ENCODE measurements at regions of chr7 and their contacts with region 1.

Region 1: GRCh38 chr7:139321071-139321745 is 19.9 kb upstream of the FMC1 start:
- DNase-seq: peak; percentile 23
- CTCF ChIP-seq: peak; percentile 44

Region 2: DNA sequence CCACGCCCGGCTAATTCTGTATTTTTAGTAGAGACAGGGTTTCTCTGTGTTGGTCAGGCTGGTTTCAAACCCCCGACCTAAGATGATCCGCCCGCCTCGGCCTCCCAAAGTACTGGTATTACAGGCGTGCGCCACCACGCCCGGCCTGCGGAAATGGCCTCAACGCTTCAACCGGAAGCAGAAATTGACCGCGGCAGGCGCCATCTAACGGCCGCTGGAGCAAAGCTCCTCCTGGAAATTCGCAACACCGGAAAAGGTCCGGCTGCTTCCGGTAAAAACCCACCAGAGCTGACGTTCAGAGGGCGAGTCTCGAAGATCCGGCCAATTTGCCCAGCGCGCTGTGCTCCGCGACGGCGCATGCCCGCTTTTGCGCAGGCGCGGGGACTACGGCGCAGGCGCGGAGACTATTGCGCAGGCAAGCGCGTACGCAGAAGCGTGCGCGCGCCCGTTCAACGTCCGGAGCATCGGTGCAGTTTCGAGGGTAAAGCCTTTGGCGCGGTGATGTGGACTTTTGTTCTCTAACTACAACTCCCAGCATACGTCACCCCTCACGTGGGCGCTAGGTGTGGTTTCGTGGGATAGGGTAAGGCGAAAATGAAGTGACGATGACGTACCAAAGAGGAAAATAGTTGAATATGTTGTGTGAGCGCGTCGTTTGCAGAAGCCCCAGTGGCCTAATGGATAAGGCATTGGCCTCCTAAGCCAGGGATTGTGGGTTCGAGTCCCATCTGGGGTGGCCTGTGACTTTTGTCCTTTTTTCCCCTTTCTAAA is 19.0 kb after region 1 on chr7:
- CTCF ChIA-PET with region 1: interaction called, 19 read pairs
- POLR2A ChIA-PET with region 1: interaction called, 3 read pairs
- DNase-seq: peak; percentile 93
- CTCF ChIP-seq: peak; percentile 68

Measured in GM10248 (cell line).